CD8-positive, alpha-beta T cell (primary cell): ENCODE measurements at regions of chr22 and their contacts with region 1.

Region 1: GRCh38 chr22:35648066-35649025 is at the start of gene APOL6:
- DNase-seq: peak in 8 of 9 experiments; percentile 29 to 88 (median 62)
- ATAC-seq: peak; percentile 76
- H3K4me3 ChIP-seq: peak within 1 kb of the TSS; percentile 88 to 99
- H3K4me3 Mint-ChIP-seq: peak within 1 kb of the TSS; percentile 100
- H3K27ac ChIP-seq: peak within 1 kb of the TSS; percentile 91 to 98
- H3K27ac Mint-ChIP-seq: peak within 1 kb of the TSS; percentile 100
- H3K4me1 ChIP-seq: peaks cover 30% of the 10 kb centered on the region
- H3K4me1 Mint-ChIP-seq: peaks cover 44% of the 10 kb centered on the region
- H3K27me3 ChIP-seq: no peaks in the 10 kb centered on the region
- H3K27me3 Mint-ChIP-seq: no peaks in the 10 kb centered on the region
- CTCF ChIP-seq: no peak
- total RNA-seq, gene APOL6: 48.4 to 49.7 TPM

Region 2: GRCh38 chr22:35660291-35661127 is 12.2 kb after region 1 on chr22:
- CTCF ChIA-PET with region 1: interaction called, 5 read pairs
- POLR2A ChIA-PET with region 1: interaction called, 29 read pairs
- intact Hi-C with region 1: loop called (anchors 1 kb)
- DNase-seq: peak in 8 of 9 experiments; percentile 48 to 90 (median 69)
- ATAC-seq: peak; percentile 85
- H3K4me3 ChIP-seq: peak overlapping the region in 1 of 2 experiments; percentile 29
- H3K4me3 Mint-ChIP-seq: peak overlapping the region; percentile 67
- H3K27ac ChIP-seq: peak overlapping the region; percentile 85 to 99
- H3K27ac Mint-ChIP-seq: peak overlapping the region; percentile 97
- H3K4me1 ChIP-seq: peaks cover 55% of the 10 kb centered on the region
- H3K4me1 Mint-ChIP-seq: peaks cover 78% of the 10 kb centered on the region
- H3K27me3 ChIP-seq: no peaks in the 10 kb centered on the region
- H3K27me3 Mint-ChIP-seq: no peaks in the 10 kb centered on the region
- CTCF ChIP-seq: no peak

Region 3: DNA sequence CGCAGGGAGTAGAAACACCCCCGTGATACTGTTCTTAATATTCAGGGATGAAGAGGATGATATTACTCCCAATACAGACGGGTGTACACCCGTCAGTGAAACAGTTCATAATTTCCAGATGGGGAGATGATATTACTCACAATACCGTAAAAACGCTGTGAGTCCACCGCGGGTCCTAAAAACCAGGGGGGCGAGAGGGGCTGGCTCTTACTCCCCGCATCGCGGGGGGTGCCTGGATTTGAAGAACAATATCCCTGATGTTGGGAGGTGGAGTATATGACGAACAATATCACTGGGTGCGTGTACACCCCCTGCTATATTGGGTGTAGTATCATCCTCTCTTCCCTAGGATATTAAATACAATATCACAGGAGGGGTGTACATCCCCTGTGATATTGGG is 48.8 kb after region 1 on chr22:
- CTCF ChIA-PET with region 1: no interaction called
- POLR2A ChIA-PET with region 1: no interaction called
- intact Hi-C with region 1: loop called in 1 of 2 experiments (anchors 10 kb)
- DNase-seq: peak in 1 of 9 experiments; percentile 32
- ATAC-seq: peak; percentile 43
- H3K4me3 ChIP-seq: no peak overlapping the region
- H3K4me3 Mint-ChIP-seq: no peak overlapping the region
- H3K27ac ChIP-seq: no peak overlapping the region
- H3K27ac Mint-ChIP-seq: no peak overlapping the region
- H3K4me1 ChIP-seq: no peaks in the 10 kb centered on the region
- H3K4me1 Mint-ChIP-seq: no peaks in the 10 kb centered on the region
- H3K27me3 ChIP-seq: no peaks in the 10 kb centered on the region
- H3K27me3 Mint-ChIP-seq: peaks cover 4% of the 10 kb centered on the region
- CTCF ChIP-seq: no peak

Region 4: DNA sequence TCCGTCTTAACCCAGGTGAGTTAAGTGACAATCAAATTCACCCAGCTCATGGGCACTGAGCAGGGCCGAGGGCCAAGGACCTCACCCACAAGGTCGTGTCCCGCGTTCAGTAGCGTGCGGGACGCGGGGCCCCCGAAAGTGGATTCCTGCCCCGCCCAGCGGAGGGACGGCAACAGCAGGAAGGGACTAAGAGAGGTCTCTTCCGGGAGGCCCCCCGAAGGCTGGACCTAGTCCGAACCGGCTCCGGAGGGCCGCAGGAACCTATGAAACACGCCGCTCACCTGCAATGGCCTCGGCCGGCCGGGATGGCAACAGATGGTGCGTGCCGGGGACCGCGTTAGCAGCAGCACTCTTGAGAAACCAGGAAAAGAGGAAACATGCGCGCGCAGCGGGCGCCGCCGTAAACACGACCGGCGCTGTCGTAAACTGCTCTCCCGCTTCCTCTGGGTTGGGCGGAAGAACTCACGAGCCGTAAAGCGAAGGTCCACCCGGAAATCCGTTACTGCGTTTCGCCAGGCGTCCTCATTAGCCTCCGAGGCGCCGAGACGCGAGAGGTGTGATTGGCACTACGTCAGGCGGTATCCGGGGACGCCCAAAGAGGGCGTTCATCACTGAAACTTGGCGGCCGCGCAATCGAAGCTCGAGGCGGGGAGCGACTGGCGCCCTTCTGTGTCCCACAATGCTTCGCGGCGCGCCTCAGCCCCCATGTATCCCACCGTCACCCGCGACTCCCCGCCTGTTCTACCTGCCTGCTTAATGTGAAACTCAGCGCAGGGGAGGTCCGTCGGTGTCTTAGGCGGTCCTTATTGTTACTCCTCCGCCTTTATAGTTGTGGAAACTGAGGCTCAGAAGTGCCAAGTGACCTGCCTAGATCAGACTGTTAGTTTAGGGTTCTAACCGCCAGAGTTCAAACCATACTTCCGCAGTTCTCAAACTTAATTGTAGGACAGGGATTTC is 880.7 kb after region 1 on chr22 and contains the start of gene EIF3D:
- CTCF ChIA-PET with region 1: no interaction called
- POLR2A ChIA-PET with region 1: no interaction called
- intact Hi-C with region 1: loop called in 1 of 2 experiments (anchors 2 kb)
- DNase-seq: peak; percentile 95 to 100 (median 98)
- ATAC-seq: peak; percentile 92
- H3K4me3 ChIP-seq: peak within 1 kb of the TSS; percentile 67 to 90
- H3K4me3 Mint-ChIP-seq: peak within 1 kb of the TSS; percentile 90
- H3K27ac ChIP-seq: peak within 1 kb of the TSS; percentile 91 to 93
- H3K27ac Mint-ChIP-seq: peak within 1 kb of the TSS; percentile 99
- H3K4me1 ChIP-seq: peaks cover 12% of the 10 kb centered on the region
- H3K4me1 Mint-ChIP-seq: peaks cover 24% of the 10 kb centered on the region
- H3K27me3 ChIP-seq: no peaks in the 10 kb centered on the region
- H3K27me3 Mint-ChIP-seq: no peaks in the 10 kb centered on the region
- CTCF ChIP-seq: no peak
- total RNA-seq, gene EIF3D: 302 to 315 TPM